SK-N-SH (cell line): ENCODE measurements at regions of chr7 and their contacts with region 1.

Region 1: GRCh38 chr7:155344600-155345433 is 47.1 kb downstream of the INSIG1 start:
- DNase-seq: peak; percentile 99
- H3K4me3 ChIP-seq: peak overlapping the region; percentile 49 to 51; a peak in 3 of 4 replicates
- H3K27ac ChIP-seq: no peak overlapping the region
- H3K4me1 ChIP-seq: peaks cover 0 to 3% of the 10 kb centered on the region in 2 experiments; a peak in 1 of 4 replicates
- H3K27me3 ChIP-seq: peaks cover 25% of the 10 kb centered on the region
- CTCF ChIP-seq: peak; percentile 93
- EP300 ChIP-seq: no peak
- RAD21 ChIP-seq: peak; percentile 83

Region 2: GRCh38 chr7:154903083-154903731 is 441.6 kb before region 1 on chr7:
- CTCF ChIA-PET with region 1: interaction called, 10 read pairs
- POLR2A ChIA-PET with region 1: no interaction called
- DNase-seq: peak; percentile 16
- H3K4me3 ChIP-seq: no peak overlapping the region
- H3K27ac ChIP-seq: no peak overlapping the region
- H3K4me1 ChIP-seq: no peaks in the 10 kb centered on the region
- H3K27me3 ChIP-seq: no peaks in the 10 kb centered on the region
- CTCF ChIP-seq: no peak
- EP300 ChIP-seq: no peak
- RAD21 ChIP-seq: no peak

Region 3: GRCh38 chr7:154947604-154948003 is 397.2 kb before region 1 on chr7:
- CTCF ChIA-PET with region 1: interaction called, 10 read pairs
- POLR2A ChIA-PET with region 1: no interaction called
- DNase-seq: no peak
- H3K4me3 ChIP-seq: no peak overlapping the region
- H3K27ac ChIP-seq: no peak overlapping the region
- H3K4me1 ChIP-seq: no peaks in the 10 kb centered on the region; a peak in 2 of 4 replicates
- H3K27me3 ChIP-seq: no peaks in the 10 kb centered on the region
- CTCF ChIP-seq: no peak
- EP300 ChIP-seq: no peak
- RAD21 ChIP-seq: no peak

Region 4: GRCh38 chr7:155190688-155191087 is 154.1 kb before region 1 on chr7:
- CTCF ChIA-PET with region 1: interaction called, 176 read pairs
- POLR2A ChIA-PET with region 1: no interaction called
- DNase-seq: peak; percentile 94
- H3K4me3 ChIP-seq: no peak overlapping the region; a peak in 1 of 4 replicates
- H3K27ac ChIP-seq: no peak overlapping the region
- H3K4me1 ChIP-seq: peaks cover 0 to 2% of the 10 kb centered on the region in 2 experiments; a peak in 1 of 4 replicates
- H3K27me3 ChIP-seq: peaks cover 19% of the 10 kb centered on the region; the same call in 1 of the 2 replicates
- CTCF ChIP-seq: peak; percentile 91
- EP300 ChIP-seq: no peak
- RAD21 ChIP-seq: peak; percentile 92

Region 5: DNA sequence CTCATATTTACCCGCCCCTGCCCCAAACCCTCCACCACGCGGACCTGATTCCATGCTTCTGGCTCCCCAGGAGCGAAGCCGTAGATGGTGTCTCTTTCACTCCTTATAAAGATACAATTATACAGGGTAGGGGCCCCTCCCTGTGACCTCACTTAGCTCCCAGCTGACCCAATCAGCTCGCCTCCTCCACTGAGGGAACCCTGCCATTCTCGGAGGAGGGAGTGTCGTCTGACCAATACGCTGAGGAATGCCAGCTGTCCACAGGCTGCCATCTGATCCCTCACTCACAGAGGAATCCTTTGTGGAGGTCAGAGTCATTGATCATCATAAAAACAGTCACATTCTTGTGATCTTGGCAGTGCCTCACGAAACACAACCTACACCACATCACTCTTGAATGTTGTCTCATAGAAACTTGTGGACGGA is 114.6 kb before region 1 on chr7:
- CTCF ChIA-PET with region 1: interaction called, 63 read pairs
- POLR2A ChIA-PET with region 1: no interaction called
- DNase-seq: no peak
- H3K4me3 ChIP-seq: no peak overlapping the region
- H3K27ac ChIP-seq: peak overlapping the region in 1 of 2 experiments; percentile 38; a peak in 2 of 4 replicates
- H3K4me1 ChIP-seq: peaks cover 5 to 25% of the 10 kb centered on the region in 2 experiments; a peak in 2 of 4 replicates
- H3K27me3 ChIP-seq: no peaks in the 10 kb centered on the region
- CTCF ChIP-seq: no peak
- EP300 ChIP-seq: peak in 1 of 2 experiments; percentile 78; a peak in 2 of 4 replicates
- RAD21 ChIP-seq: no peak

Region 6: GRCh38 chr7:155298834-155299534 is 45.8 kb before region 1 on chr7:
- CTCF ChIA-PET with region 1: interaction called, 38 read pairs
- POLR2A ChIA-PET with region 1: no interaction called
- DNase-seq: peak; percentile 97
- H3K4me3 ChIP-seq: peak overlapping the region; percentile 79 to 99
- H3K27ac ChIP-seq: peak overlapping the region; percentile 34 to 89
- H3K4me1 ChIP-seq: peaks cover 12 to 36% of the 10 kb centered on the region in 2 experiments
- H3K27me3 ChIP-seq: no peaks in the 10 kb centered on the region
- CTCF ChIP-seq: no peak
- EP300 ChIP-seq: no peak
- RAD21 ChIP-seq: no peak

Region 7: GRCh38 chr7:155356323-155357105 is 11.7 kb after region 1 on chr7:
- CTCF ChIA-PET with region 1: interaction called, 125 read pairs
- POLR2A ChIA-PET with region 1: no interaction called
- DNase-seq: peak; percentile 67
- H3K4me3 ChIP-seq: no peak overlapping the region; a peak in 1 of 4 replicates
- H3K27ac ChIP-seq: no peak overlapping the region
- H3K4me1 ChIP-seq: peaks cover 0 to 5% of the 10 kb centered on the region in 2 experiments; a peak in 1 of 4 replicates
- H3K27me3 ChIP-seq: peaks cover 49% of the 10 kb centered on the region
- CTCF ChIP-seq: peak; percentile 60
- EP300 ChIP-seq: no peak
- RAD21 ChIP-seq: peak; percentile 34; the same call in 1 of the 2 replicates